Activated naive CD4-positive, alpha-beta T cell treated with anti-CD3 and anti-CD28 coated beads for 36 hours (primary cell): ENCODE measurements at regions of chr12 and their contacts with region 1.

Region 1: DNA sequence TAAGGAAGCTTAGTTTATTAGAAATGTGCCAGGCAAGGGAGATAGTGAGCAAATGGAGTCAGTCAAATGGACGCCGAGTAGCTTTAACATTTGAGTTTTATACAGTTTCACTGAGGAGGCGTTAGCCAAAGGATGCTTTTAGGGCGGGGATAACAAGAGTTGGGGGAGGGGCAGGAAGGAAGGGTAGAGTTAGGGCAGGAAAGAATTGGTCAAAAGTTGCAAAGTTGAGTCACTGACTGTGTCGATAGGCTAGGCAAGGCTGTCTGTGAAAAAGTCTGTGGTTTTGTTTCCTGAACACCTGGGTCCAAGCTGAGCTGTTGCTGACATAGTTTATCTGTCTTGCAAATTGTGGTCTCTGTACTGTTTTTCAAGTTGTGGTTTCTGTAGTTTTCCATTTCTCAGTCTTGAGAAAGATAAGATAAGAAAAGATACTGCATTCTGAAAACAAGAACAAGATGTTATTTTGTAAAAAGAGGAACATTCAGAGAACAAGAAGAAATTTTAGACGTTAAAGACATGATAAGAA is 62.6 kb upstream of the RESF1 start:
- DNase-seq: peak; percentile 96
- H3K4me3 Mint-ChIP-seq: peak overlapping the region; percentile 55
- H3K27ac Mint-ChIP-seq: peak overlapping the region; percentile 99
- H3K4me1 Mint-ChIP-seq: peaks cover 58% of the 10 kb centered on the region
- H3K27me3 Mint-ChIP-seq: no peaks in the 10 kb centered on the region

Region 2: DNA sequence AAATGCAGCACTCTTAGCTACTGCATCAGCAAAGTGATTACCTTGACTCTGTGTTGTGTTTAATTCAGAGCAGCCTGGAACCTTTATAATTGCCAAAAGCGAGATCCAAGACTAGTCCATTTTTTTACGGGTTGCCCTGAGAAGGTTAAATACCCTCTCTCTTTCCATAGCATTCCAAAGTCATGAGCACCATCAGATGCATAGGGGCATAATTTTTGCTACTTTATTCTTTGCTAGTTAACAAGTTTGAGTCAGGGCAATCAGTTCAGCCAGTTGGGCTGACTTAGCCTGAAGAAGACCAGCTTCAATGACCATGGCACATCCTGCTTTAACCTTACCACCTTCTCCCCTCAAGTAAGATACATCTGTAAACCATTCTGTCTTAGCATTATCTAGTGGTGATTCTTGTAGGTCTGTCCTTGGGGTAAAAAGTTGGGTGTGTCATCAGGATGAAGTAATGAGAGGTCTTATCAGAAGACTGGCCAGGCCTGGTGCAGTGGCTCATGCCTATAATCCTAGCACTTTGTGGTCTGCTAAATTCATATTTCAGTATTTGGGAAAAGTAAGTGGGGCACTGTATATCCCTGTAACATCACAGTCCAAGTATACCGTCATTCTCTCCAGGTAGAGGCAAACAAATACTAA is 589.8 kb before region 1 on chr12:
- CTCF ChIA-PET with region 1: no interaction called
- intact Hi-C with region 1: no loop called
- DNase-seq: no peak
- H3K4me3 Mint-ChIP-seq: no peak overlapping the region
- H3K27ac Mint-ChIP-seq: peak overlapping the region; percentile 68
- H3K4me1 Mint-ChIP-seq: peaks cover 72% of the 10 kb centered on the region
- H3K27me3 Mint-ChIP-seq: no peaks in the 10 kb centered on the region

Region 3: DNA sequence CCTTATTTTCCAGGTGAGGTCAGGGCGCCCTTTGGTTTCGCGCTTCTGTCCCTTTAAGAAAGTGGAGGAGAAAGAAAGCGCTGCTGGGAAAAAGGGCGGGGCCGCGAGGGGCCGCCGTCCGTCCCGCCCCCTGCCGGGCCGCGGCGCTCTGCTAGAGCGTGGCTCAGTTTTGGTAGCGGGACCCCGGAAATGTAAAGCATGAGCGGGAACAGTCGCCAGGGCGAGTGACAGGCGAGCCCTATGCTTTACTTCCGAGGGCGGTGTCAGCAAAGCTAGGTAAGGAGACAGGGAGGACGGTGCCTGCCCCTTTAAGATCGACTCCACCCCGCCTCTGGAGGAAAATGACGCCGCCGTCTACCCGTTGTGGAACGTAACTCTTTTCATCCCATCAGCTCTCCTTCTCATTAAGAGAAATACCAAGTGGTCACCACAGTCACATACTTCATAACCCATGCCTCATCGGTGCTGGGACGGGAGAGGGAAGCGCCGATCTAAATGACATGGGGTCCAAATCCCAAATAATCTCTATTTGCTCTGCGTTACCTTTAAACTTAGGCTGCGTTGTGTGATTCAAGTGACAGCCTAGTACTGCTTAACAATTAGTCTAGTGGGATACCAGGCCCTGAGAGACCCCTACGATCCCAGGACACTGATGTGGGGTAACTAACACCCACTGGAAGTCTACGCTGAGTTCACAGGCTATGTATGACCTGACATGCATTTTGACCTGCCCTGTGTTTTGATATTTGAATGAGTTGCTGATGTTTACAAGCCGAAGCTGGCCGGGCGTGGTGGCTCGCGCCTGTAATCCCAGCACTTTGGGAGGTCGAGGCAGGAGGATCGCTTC is 237.3 kb before region 1 on chr12 and contains the start of gene ETFBKMT:
- CTCF ChIA-PET with region 1: no interaction called
- intact Hi-C with region 1: loop called (anchors 1 kb)
- DNase-seq: peak; percentile 96
- H3K4me3 Mint-ChIP-seq: peak within 1 kb of the TSS; percentile 94
- H3K27ac Mint-ChIP-seq: peak within 1 kb of the TSS; percentile 98
- H3K4me1 Mint-ChIP-seq: peaks cover 11% of the 10 kb centered on the region
- H3K27me3 Mint-ChIP-seq: no peaks in the 10 kb centered on the region
- total RNA-seq, gene ETFBKMT: 0.91 to 1.2 TPM

Region 4: DNA sequence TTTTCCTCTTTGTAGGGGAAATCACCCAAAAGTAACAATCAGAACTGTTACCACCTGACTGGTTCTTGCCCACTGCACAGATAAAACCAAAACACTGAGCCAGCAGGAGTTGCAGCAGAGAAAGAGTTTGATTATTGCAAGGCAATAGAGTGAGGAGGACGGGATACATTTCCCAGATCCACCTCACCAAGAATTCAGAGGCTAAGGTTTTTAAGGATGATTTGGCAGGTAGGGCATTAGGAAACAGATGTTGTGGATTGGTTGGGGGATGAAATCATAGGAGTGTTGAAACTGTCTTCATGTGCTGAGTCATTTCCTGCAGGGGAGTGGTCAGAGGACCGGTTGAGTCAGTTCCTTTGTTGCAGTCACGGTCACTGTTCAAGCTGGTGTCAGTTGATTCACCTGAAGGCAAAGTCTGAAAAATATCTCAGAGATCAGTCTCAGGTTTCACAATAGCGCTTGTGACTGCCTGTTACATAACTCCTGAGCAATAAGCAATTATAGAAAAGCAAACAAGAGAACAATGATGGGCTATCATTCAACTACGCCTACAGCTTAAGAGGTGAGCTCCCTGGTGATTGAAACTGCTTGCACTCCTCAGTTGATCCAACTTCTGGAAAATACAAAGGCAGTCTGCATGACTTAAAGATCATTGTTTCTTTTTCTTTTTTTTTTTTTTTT is 147.4 kb before region 1 on chr12:
- CTCF ChIA-PET with region 1: interaction called, 4 read pairs
- intact Hi-C with region 1: loop called (anchors 1 kb)
- DNase-seq: peak; percentile 88
- H3K4me3 Mint-ChIP-seq: no peak overlapping the region
- H3K27ac Mint-ChIP-seq: peak overlapping the region; percentile 76
- H3K4me1 Mint-ChIP-seq: peaks cover 63% of the 10 kb centered on the region
- H3K27me3 Mint-ChIP-seq: no peaks in the 10 kb centered on the region

Region 5: GRCh38 chr12:31874961-31875608 is 21.5 kb before region 1 on chr12:
- CTCF ChIA-PET with region 1: interaction called, 5 read pairs
- intact Hi-C with region 1: loop called (anchors 1 kb)
- DNase-seq: peak; percentile 90
- H3K4me3 Mint-ChIP-seq: peak overlapping the region; percentile 73
- H3K27ac Mint-ChIP-seq: peak overlapping the region; percentile 100
- H3K4me1 Mint-ChIP-seq: peaks cover 37% of the 10 kb centered on the region
- H3K27me3 Mint-ChIP-seq: no peaks in the 10 kb centered on the region

Region 6: DNA sequence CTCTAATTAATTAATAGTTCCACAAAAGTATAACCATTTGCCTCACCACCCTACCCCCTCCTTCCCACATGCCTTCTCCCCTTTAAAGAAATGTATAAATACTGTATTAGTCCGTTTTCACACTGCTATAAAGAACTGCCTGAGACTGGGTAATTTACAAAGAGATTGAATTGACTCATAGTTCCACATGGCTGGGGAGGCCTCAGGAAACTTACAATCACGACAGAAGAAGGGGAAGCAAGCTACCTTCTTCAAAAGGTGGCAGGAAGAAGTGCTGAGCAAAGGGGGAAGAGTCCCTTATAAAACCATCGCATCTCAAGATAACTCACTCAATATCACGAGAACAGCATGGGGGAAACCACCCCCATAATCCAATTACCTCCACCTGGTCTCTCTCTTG is 54.4 kb after region 1 on chr12:
- CTCF ChIA-PET with region 1: no interaction called
- intact Hi-C with region 1: loop called (anchors 1 kb)
- DNase-seq: peak; percentile 63
- H3K4me3 Mint-ChIP-seq: no peak overlapping the region
- H3K27ac Mint-ChIP-seq: peak overlapping the region; percentile 68
- H3K4me1 Mint-ChIP-seq: peaks cover 39% of the 10 kb centered on the region
- H3K27me3 Mint-ChIP-seq: no peaks in the 10 kb centered on the region

Region 7: DNA sequence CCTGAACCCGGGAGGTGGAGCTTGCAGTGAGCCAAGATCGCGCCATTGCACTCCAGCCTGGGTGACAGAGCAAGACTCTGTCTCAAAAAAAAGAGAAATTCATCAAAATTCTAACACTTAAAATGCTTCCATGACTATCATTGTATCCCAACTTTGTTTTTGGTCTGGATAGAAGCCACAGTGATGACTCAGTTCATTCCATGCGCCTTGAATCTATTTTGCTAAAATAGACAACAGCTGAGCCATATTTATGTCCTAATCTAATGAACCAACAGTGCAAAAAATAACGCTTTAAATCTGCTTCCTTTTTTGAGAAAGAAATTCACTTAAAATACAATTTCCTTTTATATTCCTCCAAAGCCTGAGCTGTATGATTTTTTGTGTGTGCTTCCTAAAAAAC is 186.9 kb after region 1 on chr12:
- CTCF ChIA-PET with region 1: no interaction called
- intact Hi-C with region 1: no loop called
- DNase-seq: no peak
- H3K4me3 Mint-ChIP-seq: no peak overlapping the region
- H3K27ac Mint-ChIP-seq: no peak overlapping the region
- H3K4me1 Mint-ChIP-seq: no peaks in the 10 kb centered on the region
- H3K27me3 Mint-ChIP-seq: no peaks in the 10 kb centered on the region